IMR-90 (cell line): ENCODE measurements at regions of chr15 and their contacts with region 1.

Region 1: GRCh38 chr15:40513609-40514008 is 42.8 kb downstream of the CHST14 start:
- DNase-seq: no peak
- ATAC-seq: no peak
- H3K4me3 ChIP-seq: no peak overlapping the region
- H3K27ac ChIP-seq: no peak overlapping the region
- H3K4me1 ChIP-seq: peaks cover 4% of the 10 kb centered on the region; the same call in 1 of the 2 replicates
- H3K27me3 ChIP-seq: peaks cover 36% of the 10 kb centered on the region
- CTCF ChIP-seq: no peak
- POLR2A ChIP-seq: no peak
- RAD21 ChIP-seq: no peak

Region 2: GRCh38 chr15:40593588-40594428 is 80.2 kb after region 1 on chr15 and contains the start of gene KNL1:
- CTCF ChIA-PET with region 1: no interaction called
- POLR2A ChIA-PET with region 1: no interaction called
- dilution Hi-C with region 1: no loop called
- in situ Hi-C with region 1: no loop called
- intact Hi-C with region 1: loop called (anchors 2 kb)
- DNase-seq: peak; percentile 90
- ATAC-seq: peak; percentile 89
- H3K4me3 ChIP-seq: peak within 1 kb of the TSS; percentile 52
- H3K27ac ChIP-seq: peak within 1 kb of the TSS; percentile 83
- H3K4me1 ChIP-seq: no peaks in the 10 kb centered on the region
- H3K27me3 ChIP-seq: no peaks in the 10 kb centered on the region
- CTCF ChIP-seq: no peak
- POLR2A ChIP-seq: peak; percentile 47
- RAD21 ChIP-seq: no peak
- total RNA-seq, gene KNL1: 25.1 and 32.5 TPM in 2 replicates